Posterior cingulate gyrus (tissue), 11 donors: ENCODE measurements at regions of chr1 and their contacts with region 1.

Region 1: DNA sequence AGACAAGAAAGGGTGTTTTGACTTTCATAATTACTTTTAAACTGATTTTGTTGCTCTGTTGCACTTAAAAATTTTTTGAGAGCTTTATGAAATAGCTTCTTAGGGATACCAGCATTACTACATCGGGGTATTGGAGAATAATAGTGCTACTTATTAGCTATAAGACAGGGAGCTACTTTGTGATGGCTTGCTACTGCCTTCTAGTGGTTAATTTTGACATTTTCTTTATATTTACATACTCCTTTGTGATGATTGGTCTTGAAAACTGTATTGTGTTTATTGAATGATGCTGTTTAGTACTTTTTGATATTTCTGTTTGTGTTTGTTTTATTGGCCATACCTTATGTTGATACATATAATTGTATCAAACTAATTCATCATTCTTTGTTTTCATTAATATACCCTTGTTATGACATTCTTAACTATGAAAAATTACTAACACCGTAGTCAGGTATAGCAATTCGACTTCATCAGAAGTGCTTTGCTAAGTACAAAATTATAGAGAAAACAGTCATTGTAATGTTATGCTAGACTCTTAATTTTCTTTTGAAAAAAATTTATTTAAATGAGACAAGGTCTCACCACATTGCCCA is 85.5 kb downstream of the CLIC4 start:
- DNase-seq: no peak

Region 2: DNA sequence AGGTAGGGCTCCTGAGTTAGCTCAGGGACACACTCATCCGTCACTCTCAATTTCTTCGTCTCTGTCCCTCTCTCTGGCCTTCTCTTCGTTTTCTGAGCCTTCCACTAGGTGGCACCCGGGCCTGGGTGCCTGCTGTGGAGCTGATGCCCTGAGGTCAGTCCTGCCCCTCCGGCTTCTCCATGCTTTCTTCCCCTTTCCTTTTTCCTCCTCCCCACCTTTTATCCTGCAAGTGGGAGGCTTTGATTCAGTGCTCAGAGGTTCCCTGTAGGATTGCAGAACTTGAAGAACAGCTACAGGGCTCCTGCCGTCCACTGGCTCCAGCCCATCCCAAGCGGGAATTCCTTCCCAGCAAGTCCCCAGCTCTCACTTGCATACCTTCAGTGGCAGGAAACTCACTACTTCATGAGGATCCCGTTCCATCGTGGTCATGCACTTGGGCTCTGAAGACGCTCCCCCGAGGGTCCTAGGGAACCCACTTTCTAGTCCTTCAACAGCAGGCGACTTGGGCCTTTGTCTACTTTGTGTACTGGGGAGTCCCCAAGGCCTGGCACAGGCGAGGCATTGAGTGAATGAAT is 142.1 kb before region 1 on chr1:
- intact Hi-C with region 1: loop called (anchors 2 kb)
- DNase-seq: peak; percentile 39 to 96 (median 78)

Region 3: DNA sequence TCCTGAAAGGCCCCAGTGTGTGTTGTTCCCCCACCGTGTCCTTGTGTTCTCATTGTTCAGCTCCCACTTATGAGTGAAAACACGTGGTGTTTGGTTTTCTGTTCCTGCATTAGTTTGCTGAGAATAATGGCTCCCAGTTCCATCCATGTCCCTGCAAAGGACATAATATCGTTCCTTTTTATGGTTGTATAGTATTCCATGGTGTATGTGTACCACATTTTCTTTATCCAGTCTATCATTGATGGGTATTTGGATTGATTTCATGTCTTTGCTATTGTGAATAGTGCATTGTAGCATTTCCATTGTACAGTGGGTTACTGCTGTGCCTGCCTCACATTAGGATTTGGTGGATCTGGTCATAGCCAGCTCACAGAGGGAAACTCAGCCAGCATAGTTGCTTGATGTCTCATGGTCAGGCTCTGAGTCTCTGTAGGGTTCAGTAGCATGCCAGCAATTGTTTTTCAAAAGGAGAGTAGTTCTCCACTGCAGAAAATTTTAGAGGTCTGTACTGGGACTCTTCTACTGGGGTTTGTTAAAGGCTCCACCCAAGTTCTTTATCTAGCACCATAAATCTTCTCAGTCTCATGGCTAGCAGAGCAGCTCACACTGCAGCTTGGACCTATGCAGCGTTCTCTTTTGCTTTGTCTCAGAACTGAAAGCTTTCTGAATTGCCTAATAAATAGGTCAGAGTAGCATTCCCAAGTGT is 58.3 kb after region 1 on chr1:
- intact Hi-C with region 1: no loop called
- DNase-seq: peak in 1 of 10 donors; percentile 4